Right lobe of liver (tissue), 6 donors: ENCODE measurements at regions of chr5 and their contacts with region 1.

Region 1: GRCh38 chr5:172984243-172984953 is 827 bp downstream of the ATP6V0E1 start:
- DNase-seq: peak; percentile 62 to 67 (median 66)
- ATAC-seq: peak; percentile 58 to 78 (median 67)
- H3K4me3 ChIP-seq: peak overlapping the region; percentile 91 to 98 (median 91)
- H3K27ac ChIP-seq: peak overlapping the region; percentile 91 to 97 (median 93)
- H3K4me1 ChIP-seq: peaks cover 0 to 7% (median 3%) of the 10 kb centered on the region in 4 donors
- H3K27me3 ChIP-seq: no peaks in the 10 kb centered on the region
- CTCF ChIP-seq: peak; percentile 36 to 43 (median 37)
- POLR2A ChIP-seq: no peak

Region 2: GRCh38 chr5:173198049-173198448 is 213.7 kb after region 1 on chr5:
- intact Hi-C with region 1: loop called in 1 of 2 experiments (anchors 10 kb)
- DNase-seq: no peak
- ATAC-seq: no peak
- H3K4me3 ChIP-seq: no peak overlapping the region
- H3K27ac ChIP-seq: no peak overlapping the region
- H3K4me1 ChIP-seq: no peaks in the 10 kb centered on the region
- H3K27me3 ChIP-seq: no peaks in the 10 kb centered on the region
- CTCF ChIP-seq: no peak
- POLR2A ChIP-seq: no peak

Region 3: GRCh38 chr5:173283318-173284288 is 299.2 kb after region 1 on chr5:
- intact Hi-C with region 1: loop called in 1 of 2 experiments (anchors 10 kb)
- DNase-seq: peak; percentile 74 to 87 (median 76)
- ATAC-seq: peak; percentile 96 to 99 (median 98)
- H3K4me3 ChIP-seq: no peak overlapping the region
- H3K27ac ChIP-seq: no peak overlapping the region
- H3K4me1 ChIP-seq: peaks cover 0 to 5% (median 0%) of the 10 kb centered on the region in 4 donors
- H3K27me3 ChIP-seq: peaks cover 0 to 3% of the 10 kb centered on the region in 2 donors
- CTCF ChIP-seq: peak; percentile 60 to 82 (median 70)
- POLR2A ChIP-seq: no peak